ENCODE measurements at regions of chr2 and their contacts with region 1.

Region 1: GRCh38 chr2:204108330-204108751 is 171.8 kb downstream of the ICOS start:
- DNase-seq: peak; percentile 14 to 81 (median 32)
- ATAC-seq: peak; percentile 71
- H3K4me3 ChIP-seq: peak overlapping the region; percentile 23
- H3K4me3 Mint-ChIP-seq: peak overlapping the region; percentile 32
- H3K27ac ChIP-seq: no peak overlapping the region
- H3K27ac Mint-ChIP-seq: peak overlapping the region; percentile 19
- H3K4me1 ChIP-seq: peaks cover 32% of the 10 kb centered on the region
- H3K4me1 Mint-ChIP-seq: peaks cover 54% of the 10 kb centered on the region
- H3K27me3 ChIP-seq: no peaks in the 10 kb centered on the region
- H3K27me3 Mint-ChIP-seq: no peaks in the 10 kb centered on the region
- CTCF ChIP-seq: peak; percentile 79

Region 2: GRCh38 chr2:204177977-204178540 is 69.7 kb after region 1 on chr2:
- CTCF ChIA-PET with region 1: interaction called, 6 read pairs
- POLR2A ChIA-PET with region 1: interaction called, 4 read pairs
- intact Hi-C with region 1: loop called (anchors 1 kb)
- DNase-seq: peak; percentile 48 to 82 (median 62)
- ATAC-seq: peak; percentile 69
- H3K4me3 ChIP-seq: no peak overlapping the region
- H3K4me3 Mint-ChIP-seq: no peak overlapping the region
- H3K27ac ChIP-seq: no peak overlapping the region
- H3K27ac Mint-ChIP-seq: no peak overlapping the region
- H3K4me1 ChIP-seq: peaks cover 4% of the 10 kb centered on the region
- H3K4me1 Mint-ChIP-seq: no peaks in the 10 kb centered on the region
- H3K27me3 ChIP-seq: peaks cover 5 to 6% of the 10 kb centered on the region in 2 experiments
- H3K27me3 Mint-ChIP-seq: peaks cover 10% of the 10 kb centered on the region
- CTCF ChIP-seq: peak; percentile 66

Region 3: DNA sequence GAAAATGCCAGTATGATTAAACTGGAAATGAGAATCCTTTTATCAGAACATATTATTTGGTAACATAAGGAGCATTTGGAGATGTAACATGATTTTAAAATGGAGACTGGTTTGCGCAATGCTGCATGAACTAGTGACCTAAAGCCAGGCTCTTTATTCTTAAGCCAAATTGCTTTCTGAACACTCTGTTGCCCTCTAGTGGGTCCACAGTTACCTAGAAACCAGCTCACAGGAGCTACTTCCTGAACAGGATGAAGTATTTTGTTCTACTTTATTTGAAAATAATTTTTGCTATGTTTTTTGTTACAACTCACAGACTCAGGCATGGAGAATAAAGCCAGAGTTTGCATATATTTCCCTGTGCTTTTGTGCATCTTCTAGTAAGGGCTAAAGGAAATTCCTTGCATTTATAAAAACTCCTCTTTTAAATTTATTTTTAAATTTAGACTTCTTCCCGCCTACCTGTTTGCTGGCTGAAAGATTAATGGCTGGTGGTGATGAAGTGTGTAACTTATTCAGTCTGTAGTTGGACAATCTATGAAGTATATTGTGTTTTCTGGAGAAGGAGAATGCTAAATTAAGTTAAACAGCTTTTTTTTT is 583.7 kb after region 1 on chr2:
- CTCF ChIA-PET with region 1: no interaction called
- POLR2A ChIA-PET with region 1: no interaction called
- intact Hi-C with region 1: loop called in 1 of 2 experiments (anchors 10 kb)
- DNase-seq: peak in 7 of 14 experiments; percentile 1 to 48 (median 11)
- ATAC-seq: no peak
- H3K4me3 ChIP-seq: no peak overlapping the region
- H3K4me3 Mint-ChIP-seq: no peak overlapping the region
- H3K27ac ChIP-seq: no peak overlapping the region
- H3K27ac Mint-ChIP-seq: no peak overlapping the region
- H3K4me1 ChIP-seq: no peaks in the 10 kb centered on the region
- H3K4me1 Mint-ChIP-seq: peaks cover 14% of the 10 kb centered on the region
- H3K27me3 ChIP-seq: no peaks in the 10 kb centered on the region
- H3K27me3 Mint-ChIP-seq: no peaks in the 10 kb centered on the region
- CTCF ChIP-seq: peak; percentile 63

Region 4: DNA sequence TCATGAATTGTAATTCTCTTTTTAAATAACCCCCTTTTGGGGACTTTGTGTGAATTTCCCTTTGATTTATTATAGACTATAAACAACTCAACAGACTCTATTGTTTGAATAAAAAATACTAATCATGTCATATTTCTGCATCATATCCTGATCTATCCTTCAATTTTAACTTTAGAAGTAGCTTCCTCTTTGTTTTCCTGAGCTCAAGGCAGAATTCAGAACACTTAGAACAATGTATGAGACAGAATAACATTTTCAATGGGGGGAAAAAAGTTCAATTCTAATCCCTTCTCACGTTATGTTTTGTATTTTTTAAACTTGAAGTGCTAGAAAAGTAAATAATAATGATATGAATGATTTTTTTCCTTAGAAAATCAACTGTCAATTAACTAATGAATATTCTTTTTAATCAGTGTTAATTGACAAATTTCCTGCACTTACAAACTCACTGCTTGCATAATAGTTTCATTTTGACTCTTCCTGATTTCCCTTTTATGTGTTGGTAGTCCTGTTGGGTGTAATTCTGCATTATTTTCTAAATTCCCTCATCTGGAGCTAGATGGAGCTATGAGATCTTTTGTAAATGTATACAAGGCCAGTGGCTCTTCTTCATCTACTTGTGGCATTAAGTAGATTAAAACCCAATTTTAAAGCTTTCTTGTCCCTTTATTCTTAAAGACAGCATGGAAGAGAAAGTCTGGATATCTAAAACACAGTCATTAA is 763.1 kb after region 1 on chr2:
- CTCF ChIA-PET with region 1: no interaction called
- POLR2A ChIA-PET with region 1: no interaction called
- intact Hi-C with region 1: loop called in 1 of 2 experiments (anchors 5 kb)
- DNase-seq: peak in 3 of 14 experiments; percentile 60 to 71 (median 61)
- ATAC-seq: peak; percentile 59
- H3K4me3 ChIP-seq: no peak overlapping the region
- H3K4me3 Mint-ChIP-seq: no peak overlapping the region
- H3K27ac ChIP-seq: no peak overlapping the region
- H3K27ac Mint-ChIP-seq: no peak overlapping the region
- H3K4me1 ChIP-seq: peaks cover 3% of the 10 kb centered on the region
- H3K4me1 Mint-ChIP-seq: peaks cover 52% of the 10 kb centered on the region
- H3K27me3 ChIP-seq: no peaks in the 10 kb centered on the region
- H3K27me3 Mint-ChIP-seq: no peaks in the 10 kb centered on the region
- CTCF ChIP-seq: peak; percentile 84

Region 5: GRCh38 chr2:205680067-205680466 is 1571.7 kb after region 1 on chr2:
- CTCF ChIA-PET with region 1: no interaction called
- POLR2A ChIA-PET with region 1: no interaction called
- intact Hi-C with region 1: loop called in 1 of 2 experiments (anchors 5 kb)
- DNase-seq: peak in 9 of 14 experiments; percentile 10 to 68 (median 22)
- ATAC-seq: no peak
- H3K4me3 ChIP-seq: no peak overlapping the region
- H3K4me3 Mint-ChIP-seq: peak overlapping the region; percentile 70
- H3K27ac ChIP-seq: no peak overlapping the region
- H3K27ac Mint-ChIP-seq: no peak overlapping the region
- H3K4me1 ChIP-seq: peaks cover 14% of the 10 kb centered on the region
- H3K4me1 Mint-ChIP-seq: peaks cover 23% of the 10 kb centered on the region
- H3K27me3 ChIP-seq: peaks cover 39 to 40% of the 10 kb centered on the region in 2 experiments
- H3K27me3 Mint-ChIP-seq: peaks cover 44% of the 10 kb centered on the region
- CTCF ChIP-seq: peak; percentile 60

Region 6: DNA sequence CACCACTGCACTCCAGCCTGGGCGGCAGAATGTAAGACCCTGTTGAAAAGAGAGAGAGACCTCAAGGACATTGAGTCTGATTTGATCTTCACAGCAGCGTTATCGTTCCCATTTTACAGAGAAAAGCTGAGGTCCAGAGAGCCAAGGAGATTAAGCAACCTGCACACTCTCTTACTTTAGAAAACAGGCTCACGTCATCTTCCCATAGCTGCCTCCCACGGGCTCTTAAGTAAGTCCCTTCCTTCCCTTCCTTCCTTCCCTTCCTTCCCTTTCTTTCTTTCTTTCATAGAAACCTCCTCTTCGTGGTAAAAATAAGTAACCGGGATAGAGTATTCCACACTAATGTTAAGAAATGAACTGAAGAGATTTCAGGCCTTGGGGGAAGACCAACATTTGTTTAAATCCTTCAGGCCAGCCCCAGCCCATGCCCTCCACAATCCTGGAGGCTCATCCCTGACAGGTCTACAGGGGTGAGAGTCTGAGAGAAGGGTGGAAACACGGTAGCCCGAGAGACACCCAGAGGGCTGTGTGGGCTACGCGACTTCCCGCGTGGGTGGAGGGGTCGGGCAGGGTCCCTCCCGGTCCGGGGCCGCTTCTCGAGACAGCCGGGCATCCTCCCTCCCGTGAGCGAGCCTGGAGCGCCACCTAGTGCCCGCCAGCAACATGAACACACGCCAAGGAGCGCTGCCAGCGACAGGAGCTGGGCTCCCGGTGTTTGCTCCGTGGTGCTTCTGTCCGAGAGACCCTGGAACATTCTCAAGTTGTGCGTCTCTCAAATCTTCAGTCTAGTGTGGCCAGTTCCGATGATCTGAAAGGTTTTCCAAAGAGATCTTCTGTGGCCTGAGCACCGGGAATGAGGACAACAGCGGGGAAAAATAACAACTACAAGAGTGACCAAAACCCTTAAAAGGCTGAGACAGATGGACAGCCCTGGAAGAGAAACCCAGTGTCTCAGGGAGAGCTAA is 1817.3 kb after region 1 on chr2:
- CTCF ChIA-PET with region 1: interaction called, 3 read pairs
- POLR2A ChIA-PET with region 1: no interaction called
- intact Hi-C with region 1: loop called in 1 of 2 experiments (anchors 10 kb)
- DNase-seq: peak; percentile 46 to 80 (median 59)
- ATAC-seq: peak; percentile 76
- H3K4me3 ChIP-seq: no peak overlapping the region
- H3K4me3 Mint-ChIP-seq: no peak overlapping the region
- H3K27ac ChIP-seq: no peak overlapping the region
- H3K27ac Mint-ChIP-seq: no peak overlapping the region
- H3K4me1 ChIP-seq: peaks cover 9% of the 10 kb centered on the region
- H3K4me1 Mint-ChIP-seq: peaks cover 10% of the 10 kb centered on the region
- H3K27me3 ChIP-seq: peaks cover 20 to 26% of the 10 kb centered on the region in 2 experiments
- H3K27me3 Mint-ChIP-seq: peaks cover 68% of the 10 kb centered on the region
- CTCF ChIP-seq: peak; percentile 74

Region 7: DNA sequence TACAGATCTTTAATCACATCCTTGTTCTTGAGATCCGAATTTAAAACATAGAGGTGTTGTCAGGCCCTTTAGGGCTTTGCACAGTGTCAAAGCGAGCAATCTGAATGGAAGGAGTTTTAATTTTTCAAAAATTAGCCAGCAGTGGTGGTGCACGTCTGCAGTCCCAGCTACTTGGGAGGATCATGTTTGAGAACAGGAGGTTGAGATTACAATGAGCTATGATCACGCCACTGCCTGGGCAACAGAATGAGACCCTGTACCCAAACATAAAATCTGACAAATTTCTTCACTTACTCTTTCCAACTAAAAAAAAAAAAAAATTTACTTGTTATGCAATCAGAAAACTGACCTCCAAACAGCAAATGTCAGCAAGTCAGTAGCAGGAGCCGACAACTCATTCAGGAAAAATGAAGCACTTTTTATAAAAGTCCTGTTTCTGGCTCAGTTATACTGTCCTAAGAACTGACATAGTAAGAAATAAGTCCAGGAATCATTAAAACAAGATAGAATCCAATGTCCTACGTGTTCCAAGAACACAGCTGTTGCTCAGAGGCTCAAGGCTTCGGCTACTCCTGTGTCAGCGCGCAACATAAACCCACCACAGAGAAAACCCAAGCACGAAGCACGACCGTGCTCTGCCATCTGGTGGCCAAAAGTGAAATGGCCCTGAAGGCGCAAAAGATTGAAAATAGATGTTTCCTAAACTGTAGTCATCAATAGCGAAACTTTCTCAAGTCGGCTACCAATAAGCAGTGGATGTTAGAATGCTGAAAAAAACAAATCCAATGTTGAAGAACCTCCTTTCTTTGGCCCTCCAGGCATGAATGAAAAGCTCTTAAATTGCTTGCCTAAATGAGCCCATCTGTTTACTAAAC is 1839.5 kb after region 1 on chr2:
- CTCF ChIA-PET with region 1: interaction called, 3 read pairs
- POLR2A ChIA-PET with region 1: no interaction called
- intact Hi-C with region 1: loop called (anchors 1 to 2 kb)
- DNase-seq: peak; percentile 18 to 65 (median 42)
- ATAC-seq: peak; percentile 68
- H3K4me3 ChIP-seq: no peak overlapping the region
- H3K4me3 Mint-ChIP-seq: no peak overlapping the region
- H3K27ac ChIP-seq: no peak overlapping the region
- H3K27ac Mint-ChIP-seq: no peak overlapping the region
- H3K4me1 ChIP-seq: peaks cover 7% of the 10 kb centered on the region
- H3K4me1 Mint-ChIP-seq: no peaks in the 10 kb centered on the region
- H3K27me3 ChIP-seq: peaks cover 0 to 4% of the 10 kb centered on the region in 2 experiments
- H3K27me3 Mint-ChIP-seq: peaks cover 23% of the 10 kb centered on the region
- CTCF ChIP-seq: peak; percentile 89

Measured in CD4-positive, alpha-beta T cell (primary cell).